Right cardiac atrium (tissue), 5 donors: ENCODE measurements at regions of chr15 and their contacts with region 1.

Region 1: DNA sequence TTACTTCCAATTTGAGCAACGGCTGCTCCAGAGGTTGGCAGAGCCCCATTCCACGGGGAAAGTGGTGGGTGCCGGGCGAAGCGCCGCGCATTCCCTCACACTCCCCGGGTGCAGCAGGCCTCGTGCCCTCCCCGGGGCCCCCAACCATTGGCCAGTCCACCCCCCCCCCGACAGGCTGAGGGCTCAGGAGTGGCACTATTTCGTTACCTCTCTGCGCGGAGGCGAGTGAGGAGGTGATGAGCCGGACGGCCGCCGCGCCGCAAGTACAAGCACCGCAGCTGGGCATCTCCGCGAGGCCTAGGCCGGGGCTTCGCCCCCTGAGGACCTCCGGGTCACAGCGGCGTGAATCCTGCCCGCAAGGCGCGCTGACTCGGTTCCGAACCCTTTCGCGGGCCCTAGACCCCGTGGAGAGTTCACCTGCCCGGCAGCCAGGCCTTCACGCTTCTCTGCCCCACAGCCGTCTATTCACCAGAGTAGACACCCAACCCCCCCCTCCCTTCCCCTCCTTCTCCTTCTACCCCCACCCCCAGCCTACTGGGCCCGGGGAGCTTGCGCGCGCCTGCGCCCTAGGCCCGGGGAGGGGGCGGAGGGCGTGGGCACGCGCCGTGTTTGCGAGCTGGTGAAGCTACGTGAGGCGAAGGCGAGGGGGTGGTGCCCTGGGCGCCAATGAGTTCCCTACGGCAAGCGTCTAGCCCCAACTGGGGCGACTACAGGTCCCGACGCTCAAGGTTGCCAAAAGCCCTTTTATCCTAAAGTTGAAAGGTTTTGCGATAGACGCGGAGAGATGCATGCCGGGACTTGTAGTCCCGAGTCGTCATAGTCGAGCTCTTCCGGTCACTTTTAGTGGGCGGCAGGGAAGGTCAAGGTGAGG is at the start of gene CLPX:
- DNase-seq: peak; percentile 94 to 97 (median 96)
- ATAC-seq: peak; percentile 97
- H3K4me3 ChIP-seq: peak within 1 kb of the TSS; percentile 97
- H3K27ac ChIP-seq: peak within 1 kb of the TSS; percentile 98
- H3K4me1 ChIP-seq: no peaks in the 10 kb centered on the region
- H3K27me3 ChIP-seq: no peaks in the 10 kb centered on the region
- total RNA-seq, gene CLPX: 44.7 to 51.2 (median 49.2) TPM

Region 2: GRCh38 chr15:65275728-65276126 is 90.6 kb after region 1 on chr15:
- intact Hi-C with region 1: loop called in 3 of 4 experiments (anchors 5 to 10 kb)
- DNase-seq: no peak
- ATAC-seq: peak in 1 of 2 donors; percentile 49
- H3K4me3 ChIP-seq: no peak overlapping the region
- H3K27ac ChIP-seq: no peak overlapping the region
- H3K4me1 ChIP-seq: peaks cover 6% of the 10 kb centered on the region
- H3K27me3 ChIP-seq: no peaks in the 10 kb centered on the region

Region 3: GRCh38 chr15:65286704-65287519 is 101.8 kb after region 1 on chr15 and contains the start of gene PARP16:
- intact Hi-C with region 1: loop called in 1 of 4 experiments (anchors 5 kb)
- DNase-seq: peak; percentile 92 to 97 (median 97)
- ATAC-seq: peak; percentile 95 to 97
- H3K4me3 ChIP-seq: peak within 1 kb of the TSS; percentile 57
- H3K27ac ChIP-seq: peak within 1 kb of the TSS; percentile 67
- H3K4me1 ChIP-seq: no peaks in the 10 kb centered on the region
- H3K27me3 ChIP-seq: no peaks in the 10 kb centered on the region
- total RNA-seq, gene PARP16: 5.2 to 6.1 (median 5.5) TPM

Region 4: DNA sequence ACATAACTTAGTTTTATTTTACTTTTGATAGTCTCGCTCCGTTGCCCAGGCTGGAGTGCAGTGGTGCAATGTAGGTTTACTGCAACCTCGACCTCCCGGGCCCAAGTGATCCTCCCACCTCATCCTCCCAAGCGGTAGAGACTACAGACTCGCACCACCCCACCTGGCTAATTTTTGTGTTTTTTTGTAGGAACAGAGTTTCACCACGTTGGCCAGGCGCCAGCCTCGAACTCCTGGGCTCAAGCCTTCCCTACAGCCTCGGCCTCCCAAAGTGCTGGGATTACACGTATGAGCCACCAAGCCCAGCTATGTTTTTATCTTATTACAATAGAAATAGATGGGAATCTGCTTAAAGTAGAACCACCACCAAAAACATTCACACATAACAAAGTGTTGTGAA is 113.6 kb after region 1 on chr15:
- intact Hi-C with region 1: loop called in 3 of 4 experiments (anchors 5 kb)
- DNase-seq: no peak
- ATAC-seq: no peak
- H3K4me3 ChIP-seq: no peak overlapping the region
- H3K27ac ChIP-seq: no peak overlapping the region
- H3K4me1 ChIP-seq: no peaks in the 10 kb centered on the region
- H3K27me3 ChIP-seq: no peaks in the 10 kb centered on the region

Region 5: DNA sequence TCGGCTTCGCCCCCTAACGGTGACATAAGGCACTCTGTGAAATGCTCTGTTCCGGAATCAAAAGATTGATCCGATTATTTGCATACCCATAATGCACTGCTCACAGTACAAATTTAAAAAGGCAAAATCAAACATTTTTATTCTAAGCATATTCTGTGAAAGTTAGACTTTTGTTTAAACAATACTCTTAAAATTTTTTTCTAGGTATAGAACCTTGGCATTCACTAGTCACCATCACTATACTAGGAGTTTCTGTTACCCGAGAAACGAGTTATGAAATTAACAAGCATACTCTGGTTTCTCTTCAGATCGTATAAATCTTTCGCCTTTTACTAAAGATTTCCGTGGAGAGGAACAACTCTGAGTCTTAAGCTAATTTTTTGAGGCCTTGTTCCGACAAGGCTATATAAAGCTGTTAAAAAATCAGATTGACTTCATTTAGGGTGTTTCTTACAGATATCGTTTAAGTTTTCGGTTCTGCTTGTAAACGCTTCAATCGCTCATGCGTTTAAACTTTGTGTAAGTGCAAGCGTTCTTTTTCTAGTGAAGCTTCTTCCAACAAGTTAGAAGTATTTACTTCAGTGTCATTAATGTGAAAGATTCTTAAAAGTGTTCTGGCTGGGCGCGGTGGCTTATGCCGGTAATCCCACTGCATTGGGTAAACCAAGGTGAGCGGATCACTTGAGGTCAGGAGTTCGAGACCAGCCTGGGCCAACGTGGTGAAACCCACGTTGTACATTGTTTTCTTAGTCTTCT is 119.5 kb after region 1 on chr15 and contains the start of gene RNU5B-1:
- intact Hi-C with region 1: loop called in 3 of 4 experiments (anchors 5 kb)
- DNase-seq: peak; percentile 65 to 81 (median 69)
- ATAC-seq: peak; percentile 90 to 92
- H3K4me3 ChIP-seq: peak within 1 kb of the TSS; percentile 97
- H3K27ac ChIP-seq: peak within 1 kb of the TSS; percentile 99
- H3K4me1 ChIP-seq: no peaks in the 10 kb centered on the region
- H3K27me3 ChIP-seq: no peaks in the 10 kb centered on the region
- total RNA-seq, gene RNU5B-1: 16.9 to 71.0 (median 42.7) TPM